ENCODE measurements at regions of chr9 and their contacts with region 1.

Region 1: DNA sequence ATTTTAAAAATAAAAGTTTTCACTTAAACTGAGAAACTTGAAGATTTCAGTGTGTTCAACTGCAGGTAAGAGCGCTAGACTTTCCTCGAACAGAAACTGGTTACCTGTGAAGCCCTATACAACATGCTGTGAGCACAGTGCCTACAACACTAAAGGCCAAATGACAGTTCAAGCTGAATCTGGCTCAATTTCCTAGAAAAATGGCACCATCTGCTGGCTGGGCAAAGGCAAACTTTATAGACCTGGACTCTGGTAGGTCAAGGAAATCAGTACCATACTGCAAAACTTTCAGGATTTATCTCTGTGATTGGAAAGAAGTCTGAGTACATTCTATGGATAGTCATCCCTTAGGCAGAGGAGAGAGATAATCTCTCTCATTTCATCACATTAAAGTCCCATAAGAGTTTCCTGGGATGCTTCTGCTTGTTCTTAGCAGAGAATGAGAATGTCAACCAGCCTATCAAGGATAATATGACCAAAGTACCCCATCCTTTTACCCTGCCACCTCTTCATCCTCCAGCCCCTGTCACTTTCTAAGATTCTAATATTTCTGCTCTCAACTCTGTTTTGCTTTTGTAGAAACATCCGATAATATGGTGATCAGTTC is 31.8 kb upstream of the FOXB2 start:
- DNase-seq: peak; percentile 35
- H3K4me3 ChIP-seq: no peak overlapping the region
- H3K27ac ChIP-seq: no peak overlapping the region
- H3K4me1 ChIP-seq: no peaks in the 10 kb centered on the region
- H3K27me3 ChIP-seq: no peaks in the 10 kb centered on the region
- CTCF ChIP-seq: peak; percentile 58 to 75

Region 2: DNA sequence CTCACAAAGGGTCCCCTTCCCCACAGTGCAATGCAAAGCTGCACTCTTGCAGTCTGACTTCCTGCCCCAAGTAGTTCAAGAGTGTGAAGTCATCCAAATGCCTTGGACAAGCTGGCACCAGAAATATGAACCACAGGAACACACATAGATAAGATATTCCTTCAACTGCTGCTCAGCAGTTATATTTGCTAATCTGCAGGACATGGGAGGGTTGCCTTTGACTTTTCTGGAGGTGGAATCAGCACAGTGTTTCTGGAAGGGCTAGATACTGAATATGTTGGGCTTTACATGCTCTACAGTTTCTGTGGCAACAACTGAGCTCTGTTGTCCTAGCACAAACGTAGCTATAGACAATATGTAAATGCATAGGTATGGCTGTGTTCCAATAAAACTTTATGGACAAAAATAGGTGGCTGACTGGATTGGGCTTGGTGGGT is 320.2 kb before region 1 on chr9:
- CTCF ChIA-PET with region 1: interaction called, 13 read pairs
- dilution Hi-C with region 1: no loop called
- in situ Hi-C with region 1: no loop called
- intact Hi-C with region 1: no loop called
- DNase-seq: peak; percentile 52
- H3K4me3 ChIP-seq: no peak overlapping the region
- H3K27ac ChIP-seq: no peak overlapping the region
- H3K4me1 ChIP-seq: peaks cover 8% of the 10 kb centered on the region
- H3K27me3 ChIP-seq: no peaks in the 10 kb centered on the region
- CTCF ChIP-seq: no peak

Region 3: DNA sequence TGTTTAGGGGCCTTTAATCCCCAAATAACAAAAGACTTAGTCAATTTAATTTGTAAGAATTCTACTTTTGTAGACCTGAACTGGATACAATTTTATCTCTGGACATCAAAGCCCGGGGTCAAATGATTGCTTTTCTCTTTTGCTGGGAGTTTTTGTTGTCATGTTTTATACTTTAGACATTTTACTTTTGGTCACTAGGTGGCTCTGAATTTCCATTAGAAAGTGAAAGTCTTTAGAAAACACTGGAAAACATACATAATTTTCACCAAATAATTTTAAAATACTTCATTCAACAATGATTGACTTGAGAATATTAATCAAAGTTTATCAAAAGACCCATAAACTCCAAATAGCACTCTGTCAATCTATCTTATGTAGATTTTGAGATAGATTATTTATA is 226.2 kb before region 1 on chr9:
- CTCF ChIA-PET with region 1: no interaction called
- dilution Hi-C with region 1: no loop called
- in situ Hi-C with region 1: no loop called
- intact Hi-C with region 1: loop called (anchors 5 kb)
- DNase-seq: no peak
- H3K4me3 ChIP-seq: no peak overlapping the region
- H3K27ac ChIP-seq: no peak overlapping the region
- H3K4me1 ChIP-seq: no peaks in the 10 kb centered on the region
- H3K27me3 ChIP-seq: no peaks in the 10 kb centered on the region
- CTCF ChIP-seq: peak; percentile 17 to 35

Region 4: GRCh38 chr9:76810377-76810957 is 177.2 kb before region 1 on chr9:
- CTCF ChIA-PET with region 1: interaction called, 5 read pairs
- dilution Hi-C with region 1: loop called (anchors 25 kb)
- in situ Hi-C with region 1: loop called in 1 of 2 experiments (anchors 25 kb)
- intact Hi-C with region 1: loop called (anchors 1 kb)
- DNase-seq: peak; percentile 35
- H3K4me3 ChIP-seq: no peak overlapping the region
- H3K27ac ChIP-seq: no peak overlapping the region
- H3K4me1 ChIP-seq: no peaks in the 10 kb centered on the region
- H3K27me3 ChIP-seq: peaks cover 2% of the 10 kb centered on the region
- CTCF ChIP-seq: peak; percentile 93 to 98

Region 5: GRCh38 chr9:76932757-76933156 is 54.9 kb before region 1 on chr9:
- CTCF ChIA-PET with region 1: no interaction called
- dilution Hi-C with region 1: loop called (anchors 5 kb)
- in situ Hi-C with region 1: no loop called
- intact Hi-C with region 1: no loop called
- DNase-seq: no peak
- H3K4me3 ChIP-seq: no peak overlapping the region
- H3K27ac ChIP-seq: no peak overlapping the region
- H3K4me1 ChIP-seq: no peaks in the 10 kb centered on the region
- H3K27me3 ChIP-seq: no peaks in the 10 kb centered on the region
- CTCF ChIP-seq: no peak

Region 6: GRCh38 chr9:77149879-77150278 is 162.2 kb after region 1 on chr9:
- CTCF ChIA-PET with region 1: no interaction called
- dilution Hi-C with region 1: no loop called
- in situ Hi-C with region 1: no loop called
- intact Hi-C with region 1: loop called (anchors 2 kb)
- DNase-seq: no peak
- H3K4me3 ChIP-seq: no peak overlapping the region
- H3K27ac ChIP-seq: no peak overlapping the region
- H3K4me1 ChIP-seq: no peaks in the 10 kb centered on the region
- H3K27me3 ChIP-seq: peaks cover 2% of the 10 kb centered on the region
- CTCF ChIP-seq: no peak